ENCODE measurements at regions of chr2 and their contacts with region 1.

Region 1: GRCh38 chr2:213205944-213206343 is 54.5 kb upstream of the IKZF2 start:
- DNase-seq: no peak
- H3K4me3 ChIP-seq: no peak overlapping the region
- H3K27ac ChIP-seq: no peak overlapping the region
- H3K4me1 ChIP-seq: peaks cover 3% of the 10 kb centered on the region
- CTCF ChIP-seq: no peak

Region 2: DNA sequence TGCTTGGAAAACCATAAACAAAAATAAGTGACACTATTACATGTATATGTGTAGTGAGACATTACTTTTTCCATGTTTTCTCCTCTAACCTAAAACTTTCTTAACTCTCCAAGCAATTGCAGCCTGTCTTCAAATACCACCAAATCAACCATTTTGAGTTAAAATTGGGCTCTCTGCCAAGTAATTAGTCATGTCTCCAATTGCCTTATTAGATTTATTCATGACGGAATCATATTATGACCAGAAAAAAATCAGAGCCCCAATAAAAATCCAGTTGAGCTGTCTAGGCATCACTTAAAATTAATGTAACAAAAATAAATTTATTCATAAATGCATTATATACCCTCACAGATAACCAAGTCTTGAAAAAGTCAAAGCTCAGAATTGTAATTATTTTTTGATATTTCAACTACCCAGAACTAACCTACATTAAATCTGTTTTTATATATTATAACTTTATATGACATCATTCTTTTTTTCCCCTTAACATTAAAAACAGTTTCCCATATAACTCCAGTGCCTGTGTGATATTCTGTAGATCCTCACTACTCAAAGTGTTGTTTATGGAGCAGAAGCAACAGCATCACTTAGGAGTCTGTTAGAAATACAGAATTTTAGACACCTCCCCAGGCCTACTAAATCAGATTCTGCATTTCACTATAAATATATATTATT is 824.4 kb before region 1 on chr2:
- CTCF ChIA-PET with region 1: no interaction called
- POLR2A ChIA-PET with region 1: no interaction called
- intact Hi-C with region 1: no loop called
- DNase-seq: no peak
- H3K4me3 ChIP-seq: no peak overlapping the region
- H3K27ac ChIP-seq: no peak overlapping the region
- H3K4me1 ChIP-seq: no peaks in the 10 kb centered on the region
- CTCF ChIP-seq: no peak

Region 3: DNA sequence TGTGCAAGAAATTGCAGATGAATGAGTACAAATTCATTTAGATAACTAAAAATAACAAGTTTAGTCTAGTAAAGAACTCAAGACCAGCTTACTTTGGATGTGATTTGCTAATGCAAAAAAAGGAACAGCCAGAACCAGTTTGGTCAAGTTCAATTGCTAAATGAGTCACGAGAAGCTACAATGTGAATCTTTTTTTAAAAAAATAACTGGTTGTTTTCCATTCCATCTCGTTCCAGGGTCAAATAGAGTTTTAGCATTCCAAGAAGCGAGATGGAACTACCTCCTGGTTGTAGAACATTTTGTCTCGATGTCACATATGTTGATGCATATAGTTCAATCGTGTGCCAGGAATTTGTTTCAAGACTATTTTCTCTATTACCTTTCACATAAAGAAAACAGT is 10.5 kb after region 1 on chr2:
- CTCF ChIA-PET with region 1: interaction called, 3 read pairs
- POLR2A ChIA-PET with region 1: interaction called, 11 read pairs
- intact Hi-C with region 1: no loop called
- DNase-seq: no peak
- H3K4me3 ChIP-seq: no peak overlapping the region
- H3K27ac ChIP-seq: no peak overlapping the region
- H3K4me1 ChIP-seq: peaks cover 6% of the 10 kb centered on the region
- CTCF ChIP-seq: no peak

Region 4: GRCh38 chr2:213411582-213412289 is 205.8 kb after region 1 on chr2:
- CTCF ChIA-PET with region 1: no interaction called
- POLR2A ChIA-PET with region 1: no interaction called
- intact Hi-C with region 1: no loop called
- DNase-seq: no peak
- H3K4me3 ChIP-seq: no peak overlapping the region
- H3K27ac ChIP-seq: no peak overlapping the region
- H3K4me1 ChIP-seq: no peaks in the 10 kb centered on the region
- CTCF ChIP-seq: no peak

Measured in OCI-LY7 (cell line).